ENCODE measurements at regions of chr14 and their contacts with region 1.

Region 1: DNA sequence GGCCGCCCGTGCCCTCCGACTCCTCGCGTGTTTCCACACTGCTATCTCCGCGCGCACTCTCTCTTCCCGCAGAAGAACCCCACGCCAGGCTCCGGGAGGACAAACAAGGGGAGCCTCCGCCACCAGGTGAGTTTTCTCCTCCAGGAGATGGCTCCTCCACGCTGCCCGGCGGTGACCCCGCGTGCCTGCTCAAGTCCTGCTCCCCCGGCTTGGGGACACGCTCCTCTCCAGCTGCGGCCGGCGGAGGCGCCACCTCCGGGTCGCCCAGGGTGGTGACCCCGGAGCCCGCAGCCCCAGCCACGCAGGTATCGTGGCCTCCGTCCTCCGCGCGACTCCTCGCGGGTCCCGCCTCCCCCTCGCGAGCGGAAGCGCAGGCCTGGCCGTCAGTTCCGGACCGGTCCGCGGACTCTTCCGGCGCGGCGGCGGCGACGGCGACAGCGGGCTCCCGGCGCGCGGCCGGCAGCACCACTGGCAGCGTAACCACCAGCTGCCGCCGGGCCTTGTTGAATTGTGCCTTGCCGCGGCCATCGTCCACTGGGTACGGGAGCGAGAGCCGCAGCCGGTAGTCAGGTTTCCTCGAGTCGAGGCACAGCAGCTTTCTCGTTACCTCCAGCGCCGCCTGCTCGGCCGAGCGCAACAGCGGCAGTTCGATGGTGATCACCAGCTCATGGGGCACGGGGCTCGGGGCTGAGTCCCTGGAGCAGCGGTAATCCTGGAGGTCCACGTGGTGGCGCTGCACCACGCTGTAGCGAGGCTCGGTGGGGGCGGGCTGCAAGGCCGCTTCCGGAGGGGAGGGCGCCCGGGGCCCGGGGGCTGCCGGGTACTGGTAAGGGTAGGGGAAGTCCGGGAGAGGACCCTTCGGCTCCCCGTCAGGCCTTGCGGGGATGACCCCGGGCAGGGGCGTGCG is 1.2 kb downstream of the DNAAF2 start:
- DNase-seq: peak; percentile 88
- H3K4me3 ChIP-seq: peak overlapping the region; percentile 94
- H3K27ac ChIP-seq: peak overlapping the region; percentile 92
- H3K27me3 ChIP-seq: no peaks in the 10 kb centered on the region
- CTCF ChIP-seq: peak; percentile 73

Region 2: DNA sequence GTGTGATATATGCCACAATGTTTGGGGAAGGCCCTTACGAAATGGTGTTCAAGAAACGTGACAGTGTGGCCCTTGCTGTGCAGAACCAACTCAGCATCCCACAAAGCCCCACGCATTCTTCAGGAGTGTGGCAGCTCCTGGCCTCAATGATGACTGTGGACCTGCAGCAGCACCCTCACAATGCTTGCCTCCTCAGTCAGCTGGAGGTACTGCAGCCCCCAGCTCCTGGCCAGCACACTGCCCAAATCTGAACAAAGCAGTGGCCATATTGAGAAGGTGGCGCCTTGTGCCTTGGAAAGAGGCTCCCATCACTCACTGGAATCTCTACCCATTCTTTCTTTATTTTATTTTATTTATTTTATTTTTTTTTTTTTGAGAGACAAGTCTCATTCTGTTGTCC is 43.8 kb after region 1 on chr14:
- CTCF ChIA-PET with region 1: interaction called, 10 read pairs
- POLR2A ChIA-PET with region 1: interaction called, 8 read pairs
- DNase-seq: no peak
- H3K4me3 ChIP-seq: no peak overlapping the region
- H3K27ac ChIP-seq: no peak overlapping the region
- H3K27me3 ChIP-seq: no peaks in the 10 kb centered on the region
- CTCF ChIP-seq: peak; percentile 27; the same call in 1 of the 2 replicates

Measured in AG04450 (cell line).